Sciatic nerve (tissue), 2 donors: ENCODE measurements at regions of chr19 and their contacts with region 1.

Region 1: GRCh38 chr19:39532233-39533002 is at the start of gene EID2B:
- DNase-seq: peak; percentile 97
- ATAC-seq: peak; percentile 99
- total RNA-seq, gene EID2B: 4.3 TPM

Region 2: GRCh38 chr19:39474139-39474622 is 58.2 kb before region 1 on chr19:
- intact Hi-C with region 1: loop called (anchors 10 kb)
- DNase-seq: peak; percentile 74
- ATAC-seq: peak; percentile 68

Region 3: GRCh38 chr19:39568604-39569003 is 36.2 kb after region 1 on chr19:
- intact Hi-C with region 1: no loop called
- DNase-seq: no peak
- ATAC-seq: no peak

Region 4: GRCh38 chr19:39599116-39599515 is 66.7 kb after region 1 on chr19:
- intact Hi-C with region 1: no loop called
- DNase-seq: no peak
- ATAC-seq: no peak

Region 5: DNA sequence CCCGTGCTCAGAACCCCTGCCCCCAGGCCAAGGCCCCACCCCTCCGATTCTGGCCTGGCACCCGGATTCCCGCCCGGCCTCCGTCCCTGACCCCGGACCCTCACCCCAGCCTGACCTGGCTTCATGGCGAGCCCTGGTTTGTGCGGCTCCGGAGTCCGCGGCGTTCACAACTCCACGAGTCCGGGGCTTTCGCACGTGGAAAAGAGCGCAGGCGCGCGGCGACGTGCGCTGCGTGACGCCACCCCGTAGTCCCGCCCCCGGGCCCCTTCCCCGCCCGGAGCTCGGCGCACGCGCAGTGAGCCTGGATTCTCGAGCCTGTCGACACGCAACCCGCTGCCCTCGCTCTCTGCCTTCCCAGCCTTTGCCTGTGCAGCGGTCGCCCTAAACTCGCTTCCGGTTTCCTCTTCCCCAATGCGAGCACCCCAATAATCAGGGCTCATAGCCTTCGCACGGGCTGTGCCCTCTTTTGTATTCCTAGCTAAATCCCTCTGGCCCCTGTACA is 313.8 kb after region 1 on chr19 and contains the start of gene FBL:
- intact Hi-C with region 1: loop called (anchors 10 kb)
- DNase-seq: peak; percentile 99
- ATAC-seq: peak; percentile 98
- total RNA-seq, gene FBL: 132 TPM